ENCODE measurements at regions of chr9 and their contacts with region 1.

Region 1: GRCh38 chr9:110623462-110624025 is 44.0 kb upstream of the SVEP1 start:
- DNase-seq: peak; percentile 45
- H3K4me3 ChIP-seq: no peak overlapping the region
- H3K27ac ChIP-seq: no peak overlapping the region
- H3K4me1 ChIP-seq: no peaks in the 10 kb centered on the region
- H3K27me3 ChIP-seq: no peaks in the 10 kb centered on the region
- CTCF ChIP-seq: peak; percentile 37 to 58

Region 2: GRCh38 chr9:109903515-109904138 is 719.9 kb before region 1 on chr9:
- CTCF ChIA-PET with region 1: no interaction called
- dilution Hi-C with region 1: no loop called
- in situ Hi-C with region 1: no loop called
- intact Hi-C with region 1: loop called (anchors 5 kb)
- DNase-seq: peak; percentile 53
- H3K4me3 ChIP-seq: no peak overlapping the region
- H3K27ac ChIP-seq: no peak overlapping the region
- H3K4me1 ChIP-seq: no peaks in the 10 kb centered on the region
- H3K27me3 ChIP-seq: no peaks in the 10 kb centered on the region
- CTCF ChIP-seq: peak; percentile 88 to 93

Region 3: GRCh38 chr9:110183208-110184145 is 440.1 kb before region 1 on chr9:
- CTCF ChIA-PET with region 1: interaction called, 7 read pairs
- dilution Hi-C with region 1: no loop called
- in situ Hi-C with region 1: loop called (anchors 10 kb)
- intact Hi-C with region 1: loop called (anchors 1 kb)
- DNase-seq: peak; percentile 59
- H3K4me3 ChIP-seq: no peak overlapping the region
- H3K27ac ChIP-seq: no peak overlapping the region
- H3K4me1 ChIP-seq: peaks cover 34% of the 10 kb centered on the region
- H3K27me3 ChIP-seq: no peaks in the 10 kb centered on the region
- CTCF ChIP-seq: peak; percentile 81 to 83

Region 4: GRCh38 chr9:110340314-110340713 is 283.2 kb before region 1 on chr9:
- CTCF ChIA-PET with region 1: interaction called, 5 read pairs
- dilution Hi-C with region 1: no loop called
- in situ Hi-C with region 1: no loop called
- intact Hi-C with region 1: loop called (anchors 5 kb)
- DNase-seq: no peak
- H3K4me3 ChIP-seq: no peak overlapping the region
- H3K27ac ChIP-seq: no peak overlapping the region
- H3K4me1 ChIP-seq: no peaks in the 10 kb centered on the region
- H3K27me3 ChIP-seq: no peaks in the 10 kb centered on the region
- CTCF ChIP-seq: peak; percentile 15 to 58

Region 5: GRCh38 chr9:110427497-110428104 is 195.9 kb before region 1 on chr9:
- CTCF ChIA-PET with region 1: interaction called, 4 read pairs
- dilution Hi-C with region 1: no loop called
- in situ Hi-C with region 1: no loop called
- intact Hi-C with region 1: loop called (anchors 5 kb)
- DNase-seq: peak; percentile 12
- H3K4me3 ChIP-seq: no peak overlapping the region
- H3K27ac ChIP-seq: no peak overlapping the region
- H3K4me1 ChIP-seq: no peaks in the 10 kb centered on the region
- H3K27me3 ChIP-seq: no peaks in the 10 kb centered on the region
- CTCF ChIP-seq: peak; percentile 68 to 73

Region 6: GRCh38 chr9:110443146-110443865 is 180.2 kb before region 1 on chr9:
- CTCF ChIA-PET with region 1: no interaction called
- dilution Hi-C with region 1: no loop called
- in situ Hi-C with region 1: loop called (anchors 10 kb)
- intact Hi-C with region 1: no loop called
- DNase-seq: peak; percentile 51
- H3K4me3 ChIP-seq: no peak overlapping the region
- H3K27ac ChIP-seq: no peak overlapping the region
- H3K4me1 ChIP-seq: peaks cover 18% of the 10 kb centered on the region
- H3K27me3 ChIP-seq: no peaks in the 10 kb centered on the region
- CTCF ChIP-seq: no peak

Region 7: DNA sequence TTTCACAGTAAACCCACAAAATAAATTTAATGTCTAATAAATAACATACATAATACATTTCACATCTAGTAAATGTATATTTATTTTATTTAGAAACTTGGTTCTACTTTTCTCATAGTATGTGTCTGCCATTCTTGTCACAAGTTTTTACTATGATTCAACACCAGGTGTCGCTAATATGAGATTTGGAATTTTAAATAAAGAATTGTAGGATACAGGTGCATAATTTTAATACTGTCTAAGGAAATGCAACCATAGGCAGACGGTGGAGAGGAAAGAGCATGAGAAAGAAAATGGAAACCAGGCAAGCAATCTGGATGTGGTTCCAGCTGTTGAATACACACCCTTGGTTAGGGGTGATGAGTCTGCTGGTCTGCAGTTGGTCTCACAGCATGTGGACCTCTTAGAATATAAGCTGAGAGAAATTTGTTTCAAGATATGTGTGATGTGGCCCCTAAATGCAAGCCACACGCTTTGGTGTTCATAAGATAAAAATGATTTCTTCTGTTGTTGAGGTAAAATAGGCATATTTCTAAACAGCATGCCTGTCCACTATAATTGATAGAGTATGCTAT is 171.2 kb before region 1 on chr9:
- CTCF ChIA-PET with region 1: interaction called, 4 read pairs
- dilution Hi-C with region 1: no loop called
- in situ Hi-C with region 1: loop called (anchors 10 kb)
- intact Hi-C with region 1: loop called (anchors 1 kb)
- DNase-seq: peak; percentile 4
- H3K4me3 ChIP-seq: no peak overlapping the region
- H3K27ac ChIP-seq: no peak overlapping the region
- H3K4me1 ChIP-seq: no peaks in the 10 kb centered on the region
- H3K27me3 ChIP-seq: no peaks in the 10 kb centered on the region
- CTCF ChIP-seq: peak; percentile 47 to 54

Measured in mammary epithelial cell (primary cell).